ENCODE measurements at regions of chr17 and their contacts with region 1.

Region 1: GRCh38 chr17:40474419-40475002 is 26.9 kb downstream of the TNS4 start:
- DNase-seq: no peak
- ATAC-seq: peak; percentile 2 to 4; a peak in 4 of 6 replicates
- H3K4me3 ChIP-seq: no peak overlapping the region
- H3K27ac ChIP-seq: peak overlapping the region; percentile 96 to 97
- H3K4me1 ChIP-seq: peaks cover 83% of the 10 kb centered on the region
- CTCF ChIP-seq: no peak
- EP300 ChIP-seq: no peak
- POLR2A ChIP-seq: 0 out of 2 replicates have a peak, but pooled peaks have one; percentile 5
- RAD21 ChIP-seq: no peak

Region 2: GRCh38 chr17:40433551-40434415 is 40.7 kb before region 1 on chr17:
- CTCF ChIA-PET with region 1: interaction called, 338 read pairs
- POLR2A ChIA-PET with region 1: no interaction called
- DNase-seq: peak in 1 of 2 experiments; percentile 66
- ATAC-seq: peak; percentile 86 to 93
- H3K4me3 ChIP-seq: no peak overlapping the region
- H3K27ac ChIP-seq: peak overlapping the region in 1 of 2 experiments; percentile 25; a peak in 3 of 6 replicates
- H3K4me1 ChIP-seq: 0 out of 3 replicates have a peak, but pooled peaks cover 3% of the 10 kb centered on the region
- CTCF ChIP-seq: peak; percentile 33; the same call in 2 of the 3 replicates
- EP300 ChIP-seq: no peak
- POLR2A ChIP-seq: no peak
- RAD21 ChIP-seq: peak in 1 of 2 experiments; percentile 50; a peak in 3 of 5 replicates

Region 3: GRCh38 chr17:40464392-40464855 is 10.1 kb before region 1 on chr17:
- CTCF ChIA-PET with region 1: interaction called, 44 read pairs
- POLR2A ChIA-PET with region 1: interaction called, 36 read pairs
- DNase-seq: peak in 1 of 2 experiments; percentile 79
- ATAC-seq: peak; percentile 3 to 22
- H3K4me3 ChIP-seq: no peak overlapping the region
- H3K27ac ChIP-seq: peak overlapping the region; percentile 71 to 90
- H3K4me1 ChIP-seq: peaks cover 47% of the 10 kb centered on the region
- CTCF ChIP-seq: 0 out of 3 replicates have a peak, but pooled peaks have one; percentile 6
- EP300 ChIP-seq: no peak
- POLR2A ChIP-seq: no peak
- RAD21 ChIP-seq: no peak

Region 4: GRCh38 chr17:40510328-40510648 is 35.8 kb after region 1 on chr17:
- CTCF ChIA-PET with region 1: interaction called, 13 read pairs
- POLR2A ChIA-PET with region 1: interaction called, 4 read pairs
- DNase-seq: peak; percentile 90 to 96
- ATAC-seq: peak; percentile 92 to 94
- H3K4me3 ChIP-seq: no peak overlapping the region
- H3K27ac ChIP-seq: peak overlapping the region; percentile 97 to 99
- H3K4me1 ChIP-seq: peaks cover 54% of the 10 kb centered on the region
- CTCF ChIP-seq: no peak
- EP300 ChIP-seq: peak; percentile 79 to 88; a peak in 3 of 5 replicates
- POLR2A ChIP-seq: no peak
- RAD21 ChIP-seq: peak in 1 of 2 experiments; percentile 25; a peak in 1 of 5 replicates

Region 5: GRCh38 chr17:40542558-40543411 is 68.3 kb after region 1 on chr17:
- CTCF ChIA-PET with region 1: interaction called, 822 read pairs
- POLR2A ChIA-PET with region 1: interaction called, 51 read pairs
- DNase-seq: peak; percentile 99 to 100
- ATAC-seq: peak; percentile 87 to 90
- H3K4me3 ChIP-seq: no peak overlapping the region
- H3K27ac ChIP-seq: peak overlapping the region; percentile 95 to 99
- H3K4me1 ChIP-seq: peaks cover 71% of the 10 kb centered on the region
- CTCF ChIP-seq: no peak
- EP300 ChIP-seq: peak; percentile 100
- POLR2A ChIP-seq: no peak
- RAD21 ChIP-seq: peak; percentile 4 to 55; a peak in 4 of 5 replicates